HCT116 (cell line): ENCODE measurements at regions of chr9 and their contacts with region 1.

Region 1: DNA sequence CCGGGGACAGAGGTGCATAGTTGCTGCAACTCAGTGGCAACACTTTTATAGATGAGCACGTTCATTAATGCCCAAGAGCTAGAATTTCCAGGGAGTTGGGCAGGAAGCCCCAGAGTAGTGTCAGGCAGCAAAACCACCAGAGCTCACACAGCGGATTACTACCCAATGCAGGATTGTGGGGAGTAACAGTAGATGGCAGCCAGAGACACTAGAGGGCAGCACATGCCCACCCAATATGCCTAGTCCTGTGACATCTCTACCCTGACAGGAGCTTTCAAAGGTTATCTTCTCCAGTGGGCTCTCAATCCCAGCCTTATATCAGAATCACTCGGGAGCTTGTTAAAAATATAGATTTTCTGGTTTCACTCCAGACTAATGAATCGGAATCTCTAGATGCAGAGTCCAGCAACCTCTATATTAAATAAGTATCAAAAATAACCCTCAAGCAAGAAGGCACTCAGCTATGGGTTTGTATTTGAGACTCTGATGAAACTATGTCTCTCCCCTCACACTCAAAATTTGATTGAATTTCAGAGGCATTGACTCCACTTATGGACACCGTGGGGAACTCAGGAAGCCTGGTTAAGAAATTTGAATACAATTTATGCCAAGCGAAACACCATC is 58.4 kb upstream of the PHF24 start:
- DNase-seq: peak; percentile 49
- ATAC-seq: peak; percentile 100
- H3K4me3 ChIP-seq: no peak overlapping the region
- H3K27ac ChIP-seq: no peak overlapping the region
- H3K4me1 ChIP-seq: no peaks in the 10 kb centered on the region
- H3K27me3 ChIP-seq: peaks cover 47% of the 10 kb centered on the region
- CTCF ChIP-seq: peak; percentile 83 to 85 (median 84)
- POLR2A ChIP-seq: no peak
- RAD21 ChIP-seq: peak; percentile 94

Region 2: GRCh38 chr9:34479431-34479866 is 420.2 kb before region 1 on chr9:
- CTCF ChIA-PET with region 1: no interaction called
- POLR2A ChIA-PET with region 1: no interaction called
- RAD21 ChIA-PET with region 1: no interaction called
- intact Hi-C with region 1: no loop called
- DNase-seq: no peak
- ATAC-seq: no peak
- H3K4me3 ChIP-seq: no peak overlapping the region
- H3K27ac ChIP-seq: no peak overlapping the region
- H3K4me1 ChIP-seq: no peaks in the 10 kb centered on the region; a peak in 1 of 4 replicates
- H3K27me3 ChIP-seq: no peaks in the 10 kb centered on the region; the same call in 1 of the 2 replicates
- CTCF ChIP-seq: no peak
- POLR2A ChIP-seq: no peak
- RAD21 ChIP-seq: no peak

Region 3: GRCh38 chr9:34759432-34760134 is 140.1 kb before region 1 on chr9:
- CTCF ChIA-PET with region 1: interaction called, 19 read pairs
- POLR2A ChIA-PET with region 1: no interaction called
- RAD21 ChIA-PET with region 1: interaction called in 1 of 2 experiments, 5 read pairs
- intact Hi-C with region 1: no loop called
- DNase-seq: no peak
- ATAC-seq: no peak
- H3K4me3 ChIP-seq: no peak overlapping the region
- H3K27ac ChIP-seq: no peak overlapping the region
- H3K4me1 ChIP-seq: peaks cover 0 to 5% of the 10 kb centered on the region in 2 experiments; a peak in 1 of 4 replicates
- H3K27me3 ChIP-seq: no peaks in the 10 kb centered on the region
- CTCF ChIP-seq: no peak
- POLR2A ChIP-seq: no peak
- RAD21 ChIP-seq: no peak

Region 4: DNA sequence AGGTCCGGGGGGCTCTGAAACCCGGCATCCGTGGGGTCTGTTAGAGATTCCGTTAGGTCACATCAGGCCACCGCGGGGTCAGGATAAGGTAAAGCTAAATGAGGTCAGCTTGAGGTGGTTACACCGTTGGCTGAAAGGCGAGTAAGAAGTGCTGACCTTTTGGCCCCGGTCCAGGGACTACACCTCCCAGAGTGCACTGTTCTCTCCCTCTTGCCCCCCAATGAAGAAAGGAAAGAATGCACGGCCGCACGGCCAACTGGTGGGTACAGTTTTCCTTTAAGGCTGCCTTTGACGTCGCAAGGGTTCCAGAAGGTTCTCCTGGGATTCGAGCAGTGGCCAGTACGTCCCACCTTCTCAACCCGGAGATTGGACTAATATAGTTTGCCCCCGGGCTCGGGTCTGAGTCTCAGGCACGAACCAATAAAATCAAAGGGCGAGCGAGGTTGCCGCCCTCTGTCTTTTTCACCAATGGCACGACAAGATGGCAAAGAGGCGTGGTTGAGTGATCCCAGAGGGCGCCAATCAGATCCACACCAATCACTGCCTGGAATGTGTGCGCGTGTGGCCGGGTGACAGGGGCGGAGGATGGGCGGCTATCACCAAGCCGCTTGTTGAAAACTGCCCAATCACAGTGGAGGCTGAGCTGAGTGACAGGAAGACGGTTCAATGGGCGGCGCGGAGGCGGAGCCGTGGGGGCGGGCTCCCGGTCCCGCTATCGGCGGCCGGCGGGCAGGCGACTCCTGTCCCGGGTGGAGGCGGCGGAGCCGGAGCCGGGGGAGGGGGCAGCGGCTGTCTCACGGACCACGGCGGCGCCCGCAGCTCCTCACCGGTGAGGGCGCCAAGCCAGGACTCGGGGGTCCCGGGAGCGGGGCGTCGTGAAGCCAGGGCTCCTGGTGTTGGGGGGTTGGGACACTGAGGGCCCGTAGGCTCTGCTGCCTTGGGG is 89.6 kb after region 1 on chr9 and contains the start of gene DNAJB5:
- CTCF ChIA-PET with region 1: interaction called, 83 read pairs
- POLR2A ChIA-PET with region 1: interaction called, 5 read pairs
- RAD21 ChIA-PET with region 1: interaction called, 11 to 14 read pairs
- intact Hi-C with region 1: loop called (anchors 1 kb)
- DNase-seq: peak; percentile 99
- ATAC-seq: peak; percentile 93
- H3K4me3 ChIP-seq: peak within 1 kb of the TSS; percentile 64 to 73
- H3K27ac ChIP-seq: no peak within 1 kb of the TSS; the same call in 1 of the 2 replicates
- H3K4me1 ChIP-seq: peaks cover 21 to 56% of the 10 kb centered on the region in 2 experiments
- H3K27me3 ChIP-seq: no peaks in the 10 kb centered on the region
- CTCF ChIP-seq: no peak
- POLR2A ChIP-seq: peak; percentile 24
- RAD21 ChIP-seq: no peak
- total RNA-seq, gene DNAJB5: 3.6 TPM

Region 5: DNA sequence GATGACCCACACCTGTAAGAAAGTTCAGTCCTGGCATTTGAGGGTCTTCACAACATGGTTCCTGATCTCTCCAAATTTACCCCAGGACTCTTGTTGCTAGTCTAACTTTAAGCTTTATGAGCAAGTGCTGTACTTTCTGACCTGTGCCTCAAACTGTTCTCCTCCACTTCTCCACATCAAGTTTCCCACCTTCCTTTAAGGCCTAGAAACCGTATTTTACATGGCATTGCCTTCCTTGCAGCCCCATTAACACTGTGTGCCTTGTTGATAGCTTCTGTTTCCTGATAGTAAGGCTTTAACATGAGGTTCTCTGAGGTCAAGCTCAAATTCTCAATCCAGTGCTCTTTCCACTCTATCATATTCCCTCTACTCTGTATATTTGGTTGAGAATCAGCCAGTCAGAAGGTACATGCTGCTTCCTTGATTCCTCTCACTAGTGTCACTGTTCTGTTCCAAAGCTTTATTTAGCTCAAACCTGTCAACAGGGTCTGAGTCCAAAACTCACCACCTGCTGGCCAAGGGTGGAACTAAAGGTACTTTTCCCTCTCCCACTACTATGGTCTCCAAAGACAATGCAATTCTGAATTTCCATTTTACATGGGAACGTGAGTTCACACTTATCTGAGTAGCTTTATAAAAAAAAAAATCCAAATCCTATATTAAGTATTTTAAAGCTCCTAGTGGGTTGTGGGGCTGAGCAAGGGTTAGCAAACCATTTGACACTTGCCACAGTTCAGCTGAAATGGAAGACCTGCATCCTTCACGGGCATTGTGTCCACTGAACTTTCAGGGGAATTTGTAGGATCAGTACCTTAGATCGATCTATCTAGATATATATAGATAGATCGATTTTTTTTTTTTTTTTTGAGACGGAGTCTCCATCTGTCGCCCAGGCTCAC is 151.7 kb after region 1 on chr9:
- CTCF ChIA-PET with region 1: interaction called, 86 read pairs
- POLR2A ChIA-PET with region 1: interaction called, 9 read pairs
- RAD21 ChIA-PET with region 1: interaction called, 13 to 17 read pairs
- intact Hi-C with region 1: loop called (anchors 1 kb)
- DNase-seq: peak; percentile 27
- ATAC-seq: peak; percentile 80
- H3K4me3 ChIP-seq: no peak overlapping the region
- H3K27ac ChIP-seq: no peak overlapping the region
- H3K4me1 ChIP-seq: no peaks in the 10 kb centered on the region
- H3K27me3 ChIP-seq: no peaks in the 10 kb centered on the region
- CTCF ChIP-seq: peak; percentile 43 to 73 (median 71); a peak in 5 of 6 replicates
- POLR2A ChIP-seq: no peak
- RAD21 ChIP-seq: peak; percentile 47; the same call in 1 of the 2 replicates

Region 6: GRCh38 chr9:35079426-35080341 is 180.0 kb after region 1 on chr9 and contains the start of gene FANCG:
- CTCF ChIA-PET with region 1: interaction called, 12 read pairs
- POLR2A ChIA-PET with region 1: no interaction called
- RAD21 ChIA-PET with region 1: no interaction called
- intact Hi-C with region 1: no loop called
- DNase-seq: peak; percentile 80
- ATAC-seq: peak; percentile 91
- H3K4me3 ChIP-seq: peak within 1 kb of the TSS; percentile 91 to 94
- H3K27ac ChIP-seq: peak within 1 kb of the TSS; percentile 76
- H3K4me1 ChIP-seq: peaks cover 12 to 21% of the 10 kb centered on the region in 2 experiments
- H3K27me3 ChIP-seq: no peaks in the 10 kb centered on the region
- CTCF ChIP-seq: no peak
- POLR2A ChIP-seq: no peak
- RAD21 ChIP-seq: no peak
- total RNA-seq, gene FANCG: 82.3 TPM

Region 7: GRCh38 chr9:35481347-35481975 is 581.8 kb after region 1 on chr9:
- CTCF ChIA-PET with region 1: interaction called, 17 read pairs
- POLR2A ChIA-PET with region 1: no interaction called
- RAD21 ChIA-PET with region 1: interaction called, 3 to 4 read pairs
- intact Hi-C with region 1: loop called (anchors 1 kb)
- DNase-seq: peak; percentile 54
- ATAC-seq: peak; percentile 64
- H3K4me3 ChIP-seq: no peak overlapping the region
- H3K27ac ChIP-seq: no peak overlapping the region
- H3K4me1 ChIP-seq: no peaks in the 10 kb centered on the region
- H3K27me3 ChIP-seq: no peaks in the 10 kb centered on the region
- CTCF ChIP-seq: peak; percentile 78 to 93 (median 87)
- POLR2A ChIP-seq: no peak
- RAD21 ChIP-seq: peak; percentile 94